ENCODE measurements at regions of chr5 and their contacts with region 1.

Region 1: GRCh38 chr5:169980418-169981053 is at the start of gene INSYN2B:
- DNase-seq: peak; percentile 81 to 86
- ATAC-seq: peak; percentile 94 to 97
- H3K4me3 ChIP-seq: peak within 1 kb of the TSS; percentile 38
- H3K27ac ChIP-seq: peak within 1 kb of the TSS; percentile 34 to 72; a peak in 5 of 6 replicates
- H3K4me1 ChIP-seq: peaks cover 18% of the 10 kb centered on the region
- CTCF ChIP-seq: peak; percentile 97
- EP300 ChIP-seq: no peak
- POLR2A ChIP-seq: no peak
- RAD21 ChIP-seq: peak; percentile 66 to 85
- polyA plus RNA-seq, gene INSYN2B: 0.26 and 0.38 TPM in 2 replicates

Region 2: DNA sequence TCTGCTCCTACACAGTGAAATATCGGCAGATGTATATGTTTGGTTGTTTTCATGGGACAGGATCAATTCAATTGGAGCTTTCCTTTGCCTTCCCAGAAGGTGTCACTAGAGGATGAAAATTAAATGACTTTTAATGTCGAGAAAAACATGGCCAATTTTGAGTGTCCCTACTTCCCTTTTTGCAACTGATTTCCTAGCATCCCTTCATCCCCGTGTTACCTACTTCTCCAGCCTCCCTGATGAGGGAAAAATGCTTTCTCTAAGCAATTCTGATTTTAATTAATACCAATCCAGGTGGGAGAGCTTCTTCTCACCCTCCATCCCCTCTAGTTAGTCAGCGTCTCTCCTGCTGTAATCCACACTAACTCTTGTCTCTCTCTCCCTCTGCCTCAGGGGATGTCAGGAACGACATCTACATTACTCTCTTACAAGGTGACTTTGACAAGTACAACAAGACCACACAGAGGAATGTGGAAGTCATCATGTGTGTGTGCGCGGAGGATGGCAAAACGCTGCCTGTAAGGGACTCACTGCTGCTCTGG is 278.6 kb before region 1 on chr5:
- CTCF ChIA-PET with region 1: interaction called, 20 read pairs
- POLR2A ChIA-PET with region 1: interaction called, 10 read pairs
- DNase-seq: peak in 1 of 2 experiments; percentile 17
- ATAC-seq: peak; percentile 48 to 75; a peak in 4 of 6 replicates
- H3K4me3 ChIP-seq: no peak overlapping the region
- H3K27ac ChIP-seq: peak overlapping the region; percentile 29 to 60; a peak in 3 of 6 replicates
- H3K4me1 ChIP-seq: peaks cover 31% of the 10 kb centered on the region
- CTCF ChIP-seq: peak; percentile 76
- EP300 ChIP-seq: no peak
- POLR2A ChIP-seq: no peak
- RAD21 ChIP-seq: peak; percentile 80 to 81

Region 3: DNA sequence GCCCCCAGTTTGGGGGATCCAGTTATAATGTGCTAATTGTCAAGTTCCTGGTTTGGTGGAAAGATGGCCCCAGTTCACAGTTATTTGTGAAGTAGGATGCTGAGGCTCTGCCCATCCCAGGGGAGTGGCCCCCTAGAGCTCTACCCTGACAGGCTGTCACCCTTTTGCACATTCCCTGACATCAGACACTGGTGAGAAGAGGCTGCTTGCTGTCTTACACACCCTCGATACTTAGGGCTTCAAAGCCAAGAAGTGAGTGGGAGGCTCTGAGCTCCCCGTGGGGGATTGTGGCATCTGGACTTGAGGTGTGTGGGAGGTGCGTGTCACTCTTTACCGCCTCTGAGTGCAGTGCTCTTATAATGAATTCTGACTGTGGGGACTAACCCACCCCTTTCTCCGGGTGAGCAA is 175.0 kb before region 1 on chr5:
- CTCF ChIA-PET with region 1: interaction called, 19 read pairs
- POLR2A ChIA-PET with region 1: no interaction called
- DNase-seq: no peak
- ATAC-seq: no peak
- H3K4me3 ChIP-seq: no peak overlapping the region
- H3K27ac ChIP-seq: no peak overlapping the region
- H3K4me1 ChIP-seq: peaks cover 13% of the 10 kb centered on the region; the same call in 2 of the 3 replicates
- CTCF ChIP-seq: no peak
- EP300 ChIP-seq: no peak
- POLR2A ChIP-seq: no peak
- RAD21 ChIP-seq: no peak

Region 4: DNA sequence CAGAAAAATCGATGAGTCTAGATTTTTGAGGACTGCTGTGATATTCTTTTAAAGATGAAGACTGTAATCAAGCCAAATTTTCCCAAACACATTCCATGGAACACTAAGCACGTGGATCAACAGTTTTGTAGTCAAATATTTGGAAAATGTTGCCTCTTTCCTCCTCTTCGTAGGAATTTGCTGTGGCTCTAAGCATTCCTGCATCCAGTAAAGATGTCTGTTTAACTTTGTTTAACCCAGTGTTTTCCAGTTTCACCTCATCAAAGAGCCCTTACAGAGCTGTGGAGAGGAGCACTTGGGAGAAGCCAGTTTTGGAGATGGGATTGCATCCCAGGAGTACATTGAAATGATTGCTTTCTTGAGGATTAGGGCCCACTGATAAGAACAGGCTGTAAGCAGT is 59.2 kb before region 1 on chr5:
- CTCF ChIA-PET with region 1: interaction called, 11 read pairs
- POLR2A ChIA-PET with region 1: no interaction called
- DNase-seq: no peak
- ATAC-seq: no peak
- H3K4me3 ChIP-seq: no peak overlapping the region
- H3K27ac ChIP-seq: no peak overlapping the region
- H3K4me1 ChIP-seq: no peaks in the 10 kb centered on the region
- CTCF ChIP-seq: no peak
- EP300 ChIP-seq: no peak
- POLR2A ChIP-seq: no peak
- RAD21 ChIP-seq: no peak

Region 5: DNA sequence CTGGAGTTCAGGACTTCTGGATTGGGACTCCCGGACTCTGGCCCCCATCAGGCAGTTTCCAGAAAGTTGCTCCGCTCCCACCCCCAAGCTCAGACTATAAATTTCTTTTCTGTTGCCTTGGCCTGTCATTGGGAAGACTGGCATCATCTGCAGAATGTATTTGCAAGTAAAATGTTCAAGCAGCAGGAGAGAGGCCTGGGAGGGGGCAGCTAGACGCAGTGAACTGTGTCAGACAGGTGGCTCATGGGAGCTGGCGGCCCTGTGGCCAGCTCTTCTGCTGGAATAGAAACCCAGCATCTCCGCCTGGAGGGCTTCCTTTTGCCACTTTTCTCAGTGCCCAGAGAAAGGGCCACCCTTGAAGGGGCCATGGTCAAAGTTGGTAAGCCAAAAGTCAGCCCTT is 16.3 kb before region 1 on chr5:
- CTCF ChIA-PET with region 1: interaction called, 59 read pairs
- POLR2A ChIA-PET with region 1: no interaction called
- DNase-seq: no peak
- ATAC-seq: no peak
- H3K4me3 ChIP-seq: no peak overlapping the region
- H3K27ac ChIP-seq: no peak overlapping the region
- H3K4me1 ChIP-seq: no peaks in the 10 kb centered on the region
- CTCF ChIP-seq: no peak
- EP300 ChIP-seq: no peak
- POLR2A ChIP-seq: no peak
- RAD21 ChIP-seq: no peak

Region 6: GRCh38 chr5:170070556-170071412 is 90.2 kb after region 1 on chr5:
- CTCF ChIA-PET with region 1: interaction called, 12 read pairs
- POLR2A ChIA-PET with region 1: no interaction called
- DNase-seq: peak; percentile 45 to 52
- ATAC-seq: peak; percentile 70 to 97; a peak in 3 of 6 replicates
- H3K4me3 ChIP-seq: no peak overlapping the region
- H3K27ac ChIP-seq: no peak overlapping the region
- H3K4me1 ChIP-seq: no peaks in the 10 kb centered on the region
- CTCF ChIP-seq: peak; percentile 77
- EP300 ChIP-seq: no peak
- POLR2A ChIP-seq: no peak
- RAD21 ChIP-seq: peak; percentile 56 to 57

Measured in A549 (cell line).